Left cardiac atrium (tissue), 4 donors: ENCODE measurements at regions of chr4 and their contacts with region 1.

Region 1: GRCh38 chr4:128461291-128462102 is 173.9 kb upstream of the PGRMC2 start:
- DNase-seq: peak; percentile 58
- ATAC-seq: peak; percentile 50 to 72

Region 2: GRCh38 chr4:128528793-128529553 is 67.5 kb after region 1 on chr4:
- intact Hi-C with region 1: loop called in 1 of 2 experiments (anchors 10 kb)
- DNase-seq: peak; percentile 37
- ATAC-seq: peak; percentile 91 to 96

Region 3: GRCh38 chr4:128608006-128608405 is 146.5 kb after region 1 on chr4:
- intact Hi-C with region 1: no loop called
- DNase-seq: no peak
- ATAC-seq: no peak